ENCODE measurements at regions of chr1 and their contacts with region 1.

Region 1: DNA sequence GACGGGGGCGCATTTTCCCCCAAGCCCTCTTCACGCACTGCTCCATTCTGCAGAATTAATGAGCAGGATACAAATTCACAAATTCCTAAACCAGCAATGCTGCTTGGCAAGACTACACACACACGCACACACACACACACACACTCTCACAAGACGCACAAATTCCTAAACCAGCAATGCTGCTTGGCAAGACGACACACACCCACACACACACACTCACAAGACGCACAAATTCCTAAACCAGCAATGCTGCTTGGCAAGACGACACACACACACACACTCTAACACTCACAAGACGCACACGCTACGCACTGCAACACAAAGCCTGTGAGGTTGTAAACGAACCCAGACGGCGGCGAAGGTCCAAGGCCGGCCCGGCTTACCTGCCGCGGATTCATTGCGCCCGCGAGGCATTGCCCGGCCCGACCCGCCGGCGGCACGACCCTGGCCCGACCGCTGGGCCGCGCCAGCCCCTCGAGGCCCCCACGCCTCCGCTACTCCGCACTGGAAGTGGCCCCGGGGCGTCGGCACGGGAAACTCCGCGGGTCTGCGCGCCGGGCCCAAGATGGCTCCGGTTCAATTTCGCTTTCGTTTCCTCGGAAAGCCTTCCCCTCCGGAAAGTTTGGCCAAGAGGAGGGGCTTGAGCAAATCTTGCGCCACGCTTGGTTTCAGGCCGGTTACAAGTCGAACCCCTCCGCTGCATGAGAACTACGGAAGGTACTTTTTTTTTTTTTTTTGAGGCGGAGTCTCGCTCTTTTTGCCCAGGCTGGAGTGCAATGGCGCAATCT is at the start of gene ADAR:
- DNase-seq: peak; percentile 89 to 96 (median 93)
- H3K4me3 ChIP-seq: peak within 1 kb of the TSS; percentile 80 to 94
- H3K4me3 Mint-ChIP-seq: peak within 1 kb of the TSS; percentile 93 to 99 (median 98)
- H3K27ac ChIP-seq: peak within 1 kb of the TSS; percentile 97
- H3K27ac Mint-ChIP-seq: peak within 1 kb of the TSS; percentile 93 to 100 (median 98)
- H3K4me1 ChIP-seq: peaks cover 58% of the 10 kb centered on the region
- H3K4me1 Mint-ChIP-seq: peaks cover 51 to 87% (median 63%) of the 10 kb centered on the region in 4 donors
- H3K27me3 ChIP-seq: no peaks in the 10 kb centered on the region
- H3K27me3 Mint-ChIP-seq: no peaks in the 10 kb centered on the region
- total RNA-seq, gene ADAR: 240 to 247 TPM

Region 2: GRCh38 chr1:154075746-154076145 is 532.1 kb before region 1 on chr1:
- CTCF ChIA-PET with region 1: no interaction called
- POLR2A ChIA-PET with region 1: no interaction called
- intact Hi-C with region 1: no loop called
- DNase-seq: no peak
- H3K4me3 ChIP-seq: no peak overlapping the region
- H3K4me3 Mint-ChIP-seq: no peak overlapping the region
- H3K27ac ChIP-seq: no peak overlapping the region
- H3K27ac Mint-ChIP-seq: no peak overlapping the region
- H3K4me1 ChIP-seq: no peaks in the 10 kb centered on the region
- H3K4me1 Mint-ChIP-seq: no peaks in the 10 kb centered on the region
- H3K27me3 ChIP-seq: no peaks in the 10 kb centered on the region
- H3K27me3 Mint-ChIP-seq: peaks cover 9 to 12% of the 10 kb centered on the region in 2 donors

Region 3: DNA sequence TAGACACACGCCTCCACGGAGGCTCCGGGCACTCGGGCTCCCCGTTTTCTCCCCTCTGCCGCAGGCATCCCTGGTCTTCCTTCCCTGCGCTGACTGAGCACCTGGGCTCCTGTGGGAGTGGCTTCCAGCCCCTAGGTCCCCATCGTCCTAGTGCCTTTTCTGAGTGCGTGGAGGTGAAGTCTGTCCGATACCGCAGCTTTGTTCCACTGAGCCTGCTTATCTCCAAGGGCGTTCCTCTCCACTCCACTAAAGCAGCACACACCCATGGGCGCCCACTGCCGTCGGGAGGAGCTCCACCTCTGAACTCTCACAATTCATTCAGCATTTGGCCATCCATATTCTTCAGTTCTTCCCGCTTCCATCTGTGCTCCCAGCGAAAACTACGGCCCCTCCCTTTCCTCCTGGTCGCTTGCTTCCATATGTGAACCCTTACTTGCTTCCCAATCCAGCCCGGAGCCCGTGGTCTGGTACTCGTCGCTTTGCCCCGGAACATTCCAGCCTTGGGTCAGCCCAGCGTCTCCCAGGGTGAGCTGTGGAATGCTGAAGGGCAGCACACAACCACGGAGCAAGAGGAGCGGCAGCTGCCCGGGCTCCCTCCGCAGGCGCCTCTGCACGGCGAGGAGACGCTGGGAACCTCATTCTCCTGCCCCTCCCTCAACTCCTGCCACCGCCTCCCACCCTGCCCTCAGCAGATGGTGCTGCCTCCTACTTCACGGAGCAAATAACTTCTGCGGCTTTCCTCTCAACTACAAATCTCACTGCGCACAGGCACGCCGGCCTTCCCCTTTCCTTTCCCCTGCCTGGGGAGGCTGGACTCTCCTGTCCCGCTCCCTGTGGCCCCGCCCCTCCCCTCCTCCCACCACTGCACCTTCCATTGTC is 255.0 kb before region 1 on chr1:
- CTCF ChIA-PET with region 1: no interaction called
- POLR2A ChIA-PET with region 1: no interaction called
- intact Hi-C with region 1: no loop called
- DNase-seq: peak; percentile 44 to 68 (median 48)
- H3K4me3 ChIP-seq: peak overlapping the region; percentile 69 to 77
- H3K4me3 Mint-ChIP-seq: peak overlapping the region; percentile 84 to 95 (median 92)
- H3K27ac ChIP-seq: peak overlapping the region; percentile 51
- H3K27ac Mint-ChIP-seq: peak overlapping the region; percentile 38 to 96 (median 90)
- H3K4me1 ChIP-seq: peaks cover 54% of the 10 kb centered on the region
- H3K4me1 Mint-ChIP-seq: peaks cover 30 to 61% (median 44%) of the 10 kb centered on the region in 4 donors
- H3K27me3 ChIP-seq: no peaks in the 10 kb centered on the region
- H3K27me3 Mint-ChIP-seq: no peaks in the 10 kb centered on the region

Region 4: DNA sequence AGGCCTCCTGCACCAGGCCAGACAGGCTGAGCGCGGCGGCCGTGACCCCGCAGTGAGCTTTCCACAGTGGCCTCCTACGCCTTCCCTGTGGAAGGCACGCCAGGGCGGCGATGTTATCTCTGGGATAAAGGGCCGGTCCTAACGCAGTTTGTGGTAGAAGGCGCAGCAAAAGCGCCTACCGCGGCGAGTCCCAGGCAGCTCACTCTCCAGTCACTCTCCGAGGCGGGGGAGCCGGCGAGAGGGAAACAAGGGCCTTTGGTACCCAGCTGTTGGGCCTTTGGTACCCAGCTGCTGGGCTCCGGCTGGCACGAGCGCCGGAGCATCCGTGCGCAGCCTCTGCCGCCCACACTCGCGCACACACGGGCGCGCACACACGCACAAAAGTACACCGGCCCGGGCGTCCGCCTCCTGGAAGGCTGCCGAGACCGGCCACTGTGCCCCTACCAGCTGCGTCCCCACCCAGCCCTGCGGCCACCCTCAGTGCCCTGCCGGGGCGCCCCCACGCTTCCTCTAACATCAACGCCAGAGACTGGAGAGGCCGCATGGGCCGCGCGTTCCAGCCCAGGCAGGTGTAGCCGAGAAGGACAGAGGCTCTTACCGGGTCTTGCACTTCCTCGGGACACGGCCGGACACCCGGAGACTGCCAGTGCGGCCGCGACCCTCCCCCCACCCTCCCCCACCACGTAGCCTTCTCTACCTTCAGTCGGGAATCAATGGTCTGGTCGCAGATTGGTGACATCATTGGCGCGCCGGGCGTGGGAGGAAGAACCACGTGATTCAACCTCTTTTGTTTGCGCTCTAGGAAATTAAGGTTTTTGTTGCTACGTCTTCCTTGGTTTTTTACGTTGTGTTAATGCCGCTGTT is 19.7 kb after region 1 on chr1:
- CTCF ChIA-PET with region 1: interaction called, 5 read pairs
- POLR2A ChIA-PET with region 1: interaction called, 49 read pairs
- intact Hi-C with region 1: loop called (anchors 1 kb)
- DNase-seq: peak; percentile 87 to 92 (median 88)
- H3K4me3 ChIP-seq: peak overlapping the region; percentile 82 to 85
- H3K4me3 Mint-ChIP-seq: peak overlapping the region; percentile 92 to 99 (median 96)
- H3K27ac ChIP-seq: peak overlapping the region; percentile 92
- H3K27ac Mint-ChIP-seq: peak overlapping the region; percentile 95 to 100 (median 100)
- H3K4me1 ChIP-seq: peaks cover 22% of the 10 kb centered on the region
- H3K4me1 Mint-ChIP-seq: peaks cover 22 to 51% (median 36%) of the 10 kb centered on the region in 4 donors
- H3K27me3 ChIP-seq: no peaks in the 10 kb centered on the region
- H3K27me3 Mint-ChIP-seq: peaks cover 1 to 4% of the 10 kb centered on the region in 2 donors

Region 5: GRCh38 chr1:154707901-154708463 is 100.2 kb after region 1 on chr1:
- CTCF ChIA-PET with region 1: no interaction called
- POLR2A ChIA-PET with region 1: no interaction called
- intact Hi-C with region 1: no loop called
- DNase-seq: no peak
- H3K4me3 ChIP-seq: no peak overlapping the region
- H3K4me3 Mint-ChIP-seq: no peak overlapping the region
- H3K27ac ChIP-seq: no peak overlapping the region
- H3K27ac Mint-ChIP-seq: no peak overlapping the region
- H3K4me1 ChIP-seq: no peaks in the 10 kb centered on the region
- H3K4me1 Mint-ChIP-seq: no peaks in the 10 kb centered on the region
- H3K27me3 ChIP-seq: peaks cover 3% of the 10 kb centered on the region
- H3K27me3 Mint-ChIP-seq: peaks cover 10% of the 10 kb centered on the region in 2 donors

Region 6: GRCh38 chr1:154812911-154813816 is 205.4 kb after region 1 on chr1:
- CTCF ChIA-PET with region 1: no interaction called
- POLR2A ChIA-PET with region 1: no interaction called
- intact Hi-C with region 1: no loop called
- DNase-seq: no peak
- H3K4me3 ChIP-seq: no peak overlapping the region
- H3K4me3 Mint-ChIP-seq: no peak overlapping the region
- H3K27ac ChIP-seq: no peak overlapping the region
- H3K27ac Mint-ChIP-seq: no peak overlapping the region
- H3K4me1 ChIP-seq: no peaks in the 10 kb centered on the region
- H3K4me1 Mint-ChIP-seq: peaks cover 0 to 3% (median 0%) of the 10 kb centered on the region in 4 donors
- H3K27me3 ChIP-seq: no peaks in the 10 kb centered on the region
- H3K27me3 Mint-ChIP-seq: peaks cover 0 to 3% of the 10 kb centered on the region in 2 donors

Measured in CD4-positive, alpha-beta memory T cell (primary cell).